GM10248 (cell line): ENCODE measurements at regions of chr14 and their contacts with region 1.

Region 1: GRCh38 chr14:76050797-76051392 is 65.3 kb downstream of the IFT43 start:
- DNase-seq: peak; percentile 57
- CTCF ChIP-seq: peak; percentile 76

Region 2: GRCh38 chr14:76034566-76034965 is 16.3 kb before region 1 on chr14:
- CTCF ChIA-PET with region 1: interaction called, 17 read pairs
- POLR2A ChIA-PET with region 1: no interaction called
- DNase-seq: no peak
- CTCF ChIP-seq: no peak

Region 3: GRCh38 chr14:76067536-76067935 is 16.6 kb after region 1 on chr14:
- CTCF ChIA-PET with region 1: interaction called, 13 read pairs
- POLR2A ChIA-PET with region 1: no interaction called
- DNase-seq: no peak
- CTCF ChIP-seq: no peak

Region 4: DNA sequence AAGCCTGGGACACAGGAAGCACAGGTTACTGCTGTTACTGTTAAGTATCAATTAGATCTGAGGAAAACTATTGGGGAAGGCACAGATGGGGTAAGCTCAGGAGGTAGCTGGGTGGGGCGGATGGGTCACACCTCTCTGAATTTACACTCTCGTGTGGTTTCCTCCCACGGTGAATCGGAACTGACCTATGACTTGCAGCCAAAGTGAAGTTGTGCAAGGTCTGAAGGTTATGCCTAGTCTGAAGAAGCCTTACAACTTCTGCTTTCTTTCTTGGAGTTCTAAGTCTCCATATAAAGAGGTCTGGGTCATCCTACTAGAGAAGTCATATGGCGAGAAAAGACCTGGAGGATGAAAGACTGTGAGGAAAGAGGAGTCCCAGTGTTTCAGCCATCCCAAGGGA is 75.2 kb after region 1 on chr14:
- CTCF ChIA-PET with region 1: no interaction called
- POLR2A ChIA-PET with region 1: no interaction called
- DNase-seq: no peak
- CTCF ChIP-seq: no peak

Region 5: DNA sequence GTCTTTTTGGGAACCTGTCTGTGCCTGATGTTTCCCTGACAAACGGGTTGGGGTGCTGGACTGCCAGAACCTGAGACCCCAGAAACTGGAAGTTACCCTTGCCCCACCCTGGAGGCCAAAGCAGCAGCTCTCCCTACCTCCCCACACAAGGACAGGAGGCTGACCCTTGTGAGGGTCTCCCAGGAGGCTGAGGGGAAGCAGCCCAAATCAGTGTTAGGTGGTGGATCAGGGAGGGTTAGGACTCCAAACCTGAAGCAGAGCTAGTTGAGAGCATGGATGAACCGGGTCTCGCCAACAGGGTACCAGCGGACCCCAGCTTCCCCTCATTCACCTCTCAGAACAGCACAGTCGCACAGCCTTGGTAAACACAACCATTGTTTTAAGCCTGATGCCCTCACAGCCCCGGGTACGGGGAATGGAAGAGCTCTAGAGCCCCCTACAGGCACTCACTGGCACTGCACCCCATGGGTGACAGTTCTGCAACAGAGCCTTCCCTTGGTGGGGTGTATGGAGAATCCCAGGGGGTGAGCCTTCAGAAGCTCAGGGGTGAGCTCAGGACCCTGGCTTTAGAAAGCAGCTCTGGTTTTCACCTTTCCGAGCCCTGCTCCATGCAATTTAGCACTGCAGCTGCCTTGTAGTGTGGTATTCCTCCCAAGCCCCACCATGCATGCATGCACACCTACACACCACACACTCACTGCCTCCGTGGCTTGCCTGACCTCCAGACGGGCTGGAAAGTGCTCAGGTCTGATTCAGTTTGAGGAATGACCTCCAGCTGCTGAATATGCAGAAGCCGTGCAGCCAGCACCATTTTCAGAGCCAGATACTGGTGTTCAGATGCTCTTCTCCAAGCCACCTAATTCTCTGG is 336.3 kb after region 1 on chr14:
- CTCF ChIA-PET with region 1: interaction called, 159 read pairs
- POLR2A ChIA-PET with region 1: no interaction called
- DNase-seq: peak; percentile 87
- CTCF ChIP-seq: peak; percentile 98

Region 6: DNA sequence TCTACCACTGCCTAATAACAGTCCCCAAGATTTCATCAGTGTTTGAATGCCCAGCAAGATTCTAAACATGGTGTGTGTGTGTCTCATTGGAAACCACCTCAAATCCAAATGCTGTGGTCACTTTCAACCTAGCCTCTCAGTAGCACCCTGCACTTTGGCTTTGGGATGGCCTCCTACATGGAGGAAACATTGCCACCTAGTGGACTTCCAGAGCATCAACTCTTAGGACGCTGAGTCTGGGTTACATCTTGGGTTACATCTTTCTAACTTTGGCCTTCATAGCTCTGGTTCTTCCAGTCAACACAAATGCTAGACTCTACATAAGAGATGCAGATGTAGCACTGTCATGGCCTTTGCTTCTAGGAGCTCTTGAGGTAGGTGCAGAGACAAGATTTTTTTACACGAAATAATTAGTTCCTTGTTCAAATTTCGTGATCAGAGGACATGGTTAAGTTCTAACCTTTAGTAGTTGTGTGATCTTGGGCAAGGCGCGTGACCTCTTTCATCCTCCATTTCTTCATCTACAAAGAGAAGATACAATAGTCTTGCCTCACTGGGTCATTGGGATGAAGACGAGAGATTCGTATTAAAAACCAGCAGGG is 596.9 kb after region 1 on chr14:
- CTCF ChIA-PET with region 1: interaction called, 31 read pairs
- POLR2A ChIA-PET with region 1: no interaction called
- DNase-seq: peak; percentile 69
- CTCF ChIP-seq: peak; percentile 80